ENCODE measurements at regions of chr1 and their contacts with region 1.

Region 1: DNA sequence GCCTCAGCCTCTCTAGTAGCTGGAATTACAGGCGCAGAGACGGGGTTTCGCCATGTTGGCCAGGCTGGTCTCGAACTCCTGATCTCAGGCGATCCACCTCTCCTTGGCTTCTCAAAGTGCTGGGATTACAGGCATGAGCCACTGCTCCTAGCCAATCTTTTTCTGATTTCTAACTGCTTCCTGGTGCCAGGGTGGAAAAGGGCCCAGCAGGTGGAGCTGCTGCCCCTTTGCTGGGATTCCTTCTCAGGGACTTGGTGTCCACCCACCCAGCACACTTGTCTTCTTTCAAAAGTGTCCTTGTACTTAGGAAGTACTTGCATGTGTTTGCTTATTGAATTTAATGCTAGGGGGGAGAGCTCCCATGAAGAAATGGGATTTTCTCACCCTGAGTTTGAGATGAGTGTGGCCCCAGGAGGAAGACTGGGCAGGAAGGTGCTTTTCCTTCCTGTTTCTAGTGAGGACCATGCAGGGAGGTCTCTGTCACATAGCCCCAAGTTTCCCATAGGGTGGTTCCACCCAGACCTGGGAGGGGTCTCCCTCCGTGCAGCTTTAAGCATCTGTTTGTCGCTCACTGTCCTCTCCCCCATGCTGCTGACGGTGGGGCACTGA is 14.2 kb downstream of the UTP11 start:
- DNase-seq: peak; percentile 63
- H3K4me3 ChIP-seq: no peak overlapping the region
- H3K27ac ChIP-seq: no peak overlapping the region
- H3K4me1 ChIP-seq: peaks cover 40% of the 10 kb centered on the region
- H3K27me3 ChIP-seq: no peaks in the 10 kb centered on the region
- CTCF ChIP-seq: peak; percentile 62 to 78
- POLR2A ChIP-seq: no peak

Region 2: DNA sequence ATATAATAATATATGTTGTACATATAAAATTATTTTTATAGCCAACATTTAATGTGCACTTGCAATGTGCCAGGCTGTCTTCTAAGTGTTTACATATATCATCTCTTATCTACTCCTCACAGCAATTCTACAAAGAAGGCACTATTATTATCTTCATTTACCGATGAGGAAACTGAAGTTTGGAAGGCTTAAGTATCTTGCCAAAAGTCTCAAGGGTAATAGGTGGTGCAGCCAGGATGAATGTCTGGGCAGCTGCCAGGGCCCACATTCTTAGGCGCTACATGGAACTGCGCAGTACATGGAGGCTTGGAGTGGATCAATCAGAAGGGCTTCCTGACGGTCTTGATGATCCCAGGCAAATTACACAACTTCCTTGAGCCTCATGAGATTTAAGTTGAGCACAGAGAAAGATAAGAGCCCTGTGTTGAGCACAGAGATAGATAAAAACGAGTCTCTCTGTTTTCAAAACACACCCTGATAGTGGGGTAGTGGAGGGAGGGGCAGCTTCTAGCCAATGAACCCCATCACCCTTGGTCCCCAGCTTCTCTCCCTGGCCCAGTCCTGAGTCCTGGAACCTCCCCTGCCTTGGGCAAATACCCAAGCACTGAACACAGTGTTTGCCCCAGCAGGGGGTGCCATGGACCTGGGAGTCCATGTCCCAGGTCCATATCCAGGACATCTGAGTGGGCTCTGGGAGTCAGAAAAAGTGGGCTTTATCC is 10.7 kb after region 1 on chr1:
- CTCF ChIA-PET with region 1: interaction called, 20 read pairs
- POLR2A ChIA-PET with region 1: no interaction called
- dilution Hi-C with region 1: no loop called
- intact Hi-C with region 1: no loop called
- DNase-seq: no peak
- H3K4me3 ChIP-seq: no peak overlapping the region
- H3K27ac ChIP-seq: no peak overlapping the region
- H3K4me1 ChIP-seq: no peaks in the 10 kb centered on the region
- H3K27me3 ChIP-seq: peaks cover 14 to 18% of the 10 kb centered on the region in 2 experiments
- CTCF ChIP-seq: peak; percentile 21 to 35
- POLR2A ChIP-seq: no peak

Region 3: GRCh38 chr1:38071312-38072256 is 44.9 kb after region 1 on chr1:
- CTCF ChIA-PET with region 1: interaction called, 66 read pairs
- POLR2A ChIA-PET with region 1: interaction called, 3 read pairs
- dilution Hi-C with region 1: no loop called
- intact Hi-C with region 1: loop called (anchors 1 kb)
- DNase-seq: peak; percentile 28
- H3K4me3 ChIP-seq: no peak overlapping the region
- H3K27ac ChIP-seq: no peak overlapping the region
- H3K4me1 ChIP-seq: no peaks in the 10 kb centered on the region
- H3K27me3 ChIP-seq: peaks cover 7 to 8% of the 10 kb centered on the region in 2 experiments
- CTCF ChIP-seq: peak in 1 of 2 donors; percentile 41
- POLR2A ChIP-seq: no peak

Region 4: GRCh38 chr1:38197312-38198021 is 170.8 kb after region 1 on chr1:
- CTCF ChIA-PET with region 1: no interaction called
- POLR2A ChIA-PET with region 1: no interaction called
- dilution Hi-C with region 1: no loop called
- intact Hi-C with region 1: no loop called
- DNase-seq: no peak
- H3K4me3 ChIP-seq: no peak overlapping the region
- H3K27ac ChIP-seq: no peak overlapping the region
- H3K4me1 ChIP-seq: no peaks in the 10 kb centered on the region
- H3K27me3 ChIP-seq: no peaks in the 10 kb centered on the region
- CTCF ChIP-seq: no peak
- POLR2A ChIP-seq: no peak

Region 5: DNA sequence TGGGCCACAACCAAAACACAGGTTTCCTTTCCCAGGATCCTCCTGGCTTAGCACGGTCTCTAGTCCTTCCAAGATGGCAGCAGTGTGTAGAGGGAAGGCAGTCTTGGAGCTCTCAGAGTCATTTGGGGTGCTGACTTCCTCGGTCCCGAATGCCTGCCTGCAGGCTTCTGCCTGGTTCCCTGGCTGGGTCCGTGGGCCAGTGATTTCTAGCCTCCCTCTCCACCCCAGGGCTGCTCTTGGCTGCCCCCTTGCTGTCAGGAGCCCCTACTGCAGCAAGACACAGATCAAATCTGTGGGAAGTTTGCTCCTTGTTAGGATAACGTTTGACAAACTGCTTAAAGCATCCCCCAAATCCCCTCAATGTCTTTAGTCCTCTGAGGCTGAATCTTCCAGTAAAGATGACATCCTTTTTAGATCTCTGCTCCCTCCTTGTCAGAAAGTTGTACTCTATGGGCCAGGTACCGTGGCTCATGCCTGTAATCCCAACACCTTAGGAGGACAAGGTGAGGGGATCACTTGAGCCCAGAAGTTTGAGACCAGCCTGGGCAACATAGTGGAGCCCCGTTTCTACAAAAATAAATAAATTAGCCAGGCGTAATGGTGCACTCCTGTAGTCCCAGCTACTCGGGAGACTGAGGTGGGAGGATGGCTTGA is 560.4 kb after region 1 on chr1:
- CTCF ChIA-PET with region 1: no interaction called
- POLR2A ChIA-PET with region 1: no interaction called
- dilution Hi-C with region 1: no loop called
- intact Hi-C with region 1: loop called (anchors 1 kb)
- DNase-seq: peak; percentile 41
- H3K4me3 ChIP-seq: no peak overlapping the region
- H3K27ac ChIP-seq: no peak overlapping the region
- H3K4me1 ChIP-seq: no peaks in the 10 kb centered on the region
- H3K27me3 ChIP-seq: peaks cover 0 to 1% of the 10 kb centered on the region in 2 experiments
- CTCF ChIP-seq: peak; percentile 90 to 93
- POLR2A ChIP-seq: no peak

Region 6: GRCh38 chr1:38680801-38681510 is 654.3 kb after region 1 on chr1:
- CTCF ChIA-PET with region 1: no interaction called
- POLR2A ChIA-PET with region 1: no interaction called
- dilution Hi-C with region 1: no loop called
- intact Hi-C with region 1: no loop called
- DNase-seq: peak; percentile 15
- H3K4me3 ChIP-seq: no peak overlapping the region
- H3K27ac ChIP-seq: no peak overlapping the region
- H3K4me1 ChIP-seq: no peaks in the 10 kb centered on the region
- H3K27me3 ChIP-seq: peaks cover 0 to 2% of the 10 kb centered on the region in 2 experiments
- CTCF ChIP-seq: no peak
- POLR2A ChIP-seq: no peak

Region 7: GRCh38 chr1:38818175-38818976 is 791.7 kb after region 1 on chr1:
- CTCF ChIA-PET with region 1: interaction called, 4 read pairs
- POLR2A ChIA-PET with region 1: no interaction called
- dilution Hi-C with region 1: no loop called
- intact Hi-C with region 1: loop called (anchors 5 kb)
- DNase-seq: no peak
- H3K4me3 ChIP-seq: no peak overlapping the region
- H3K27ac ChIP-seq: no peak overlapping the region
- H3K4me1 ChIP-seq: peaks cover 4% of the 10 kb centered on the region
- H3K27me3 ChIP-seq: peaks cover 43 to 67% of the 10 kb centered on the region in 2 experiments
- CTCF ChIP-seq: peak; percentile 62 to 85
- POLR2A ChIP-seq: no peak